ENCODE measurements at regions of chr6 and their contacts with region 1.

Region 1: DNA sequence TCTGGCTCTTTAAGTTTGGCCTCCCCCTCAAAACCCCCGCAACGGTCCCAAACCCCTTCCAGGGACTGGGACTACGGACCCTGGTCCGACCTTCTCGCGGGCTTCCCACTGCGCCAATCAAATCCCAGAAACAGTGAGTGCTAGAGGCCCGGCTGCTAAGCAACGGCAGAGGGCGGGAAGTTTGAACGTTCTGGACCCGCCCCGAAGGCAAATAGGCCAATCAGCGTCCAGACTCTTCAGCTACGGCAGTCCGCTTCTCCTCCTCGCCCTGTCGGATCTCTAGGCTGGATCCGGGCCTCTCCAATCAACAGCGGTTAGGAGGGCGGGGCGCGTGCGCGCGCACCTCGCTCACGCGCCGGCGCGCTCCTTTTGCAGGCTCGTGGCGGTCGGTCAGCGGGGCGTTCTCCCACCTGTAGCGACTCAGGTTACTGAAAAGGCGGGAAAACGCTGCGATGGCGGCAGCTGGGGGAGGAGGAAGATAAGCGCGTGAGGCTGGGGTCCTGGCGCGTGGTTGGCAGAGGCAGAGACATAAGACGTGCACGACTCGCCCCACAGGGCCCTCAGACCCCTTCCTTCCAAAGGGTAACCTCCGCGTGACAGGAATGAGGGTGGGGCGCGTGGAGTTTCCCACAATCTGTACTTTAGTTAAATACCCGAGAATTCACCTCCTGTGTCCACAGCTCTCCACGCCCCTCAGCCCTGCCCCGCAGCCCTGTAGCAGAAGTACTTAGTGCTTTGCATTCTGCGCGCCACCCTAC is at the start of gene MSH5:
- DNase-seq: peak; percentile 91 to 97 (median 93)
- H3K4me3 ChIP-seq: peak within 1 kb of the TSS; percentile 84
- H3K4me3 Mint-ChIP-seq: peak within 1 kb of the TSS; percentile 93 to 99 (median 98)
- H3K27ac ChIP-seq: peak within 1 kb of the TSS; percentile 98
- H3K27ac Mint-ChIP-seq: peak within 1 kb of the TSS; percentile 91 to 99 (median 96)
- H3K4me1 ChIP-seq: peaks cover 40% of the 10 kb centered on the region
- H3K4me1 Mint-ChIP-seq: peaks cover 46 to 62% (median 55%) of the 10 kb centered on the region in 3 donors
- H3K27me3 ChIP-seq: no peaks in the 10 kb centered on the region
- H3K27me3 Mint-ChIP-seq: no peaks in the 10 kb centered on the region
- total RNA-seq, gene MSH5: 36.4 to 39.8 TPM

Region 2: GRCh38 chr6:31815025-31815838 is 75.4 kb after region 1 on chr6 and contains the starts of genes HSPA1A and HSPA1L:
- CTCF ChIA-PET with region 1: interaction called, 4 read pairs
- POLR2A ChIA-PET with region 1: interaction called, 11 read pairs
- DNase-seq: peak; percentile 35 to 70 (median 49)
- H3K4me3 ChIP-seq: peak within 1 kb of the TSS; percentile 70
- H3K4me3 Mint-ChIP-seq: peak within 1 kb of the TSS; percentile 93 to 99 (median 96)
- H3K27ac ChIP-seq: peak within 1 kb of the TSS; percentile 88
- H3K27ac Mint-ChIP-seq: peak within 1 kb of the TSS; percentile 89 to 97 (median 94)
- H3K4me1 ChIP-seq: peaks cover 36% of the 10 kb centered on the region
- H3K4me1 Mint-ChIP-seq: peaks cover 41 to 58% (median 52%) of the 10 kb centered on the region in 3 donors
- H3K27me3 ChIP-seq: no peaks in the 10 kb centered on the region
- H3K27me3 Mint-ChIP-seq: no peaks in the 10 kb centered on the region
- total RNA-seq, gene HSPA1A: 64.8 to 70.1 TPM
- total RNA-seq, gene HSPA1L: 3.5 to 3.8 TPM

Region 3: DNA sequence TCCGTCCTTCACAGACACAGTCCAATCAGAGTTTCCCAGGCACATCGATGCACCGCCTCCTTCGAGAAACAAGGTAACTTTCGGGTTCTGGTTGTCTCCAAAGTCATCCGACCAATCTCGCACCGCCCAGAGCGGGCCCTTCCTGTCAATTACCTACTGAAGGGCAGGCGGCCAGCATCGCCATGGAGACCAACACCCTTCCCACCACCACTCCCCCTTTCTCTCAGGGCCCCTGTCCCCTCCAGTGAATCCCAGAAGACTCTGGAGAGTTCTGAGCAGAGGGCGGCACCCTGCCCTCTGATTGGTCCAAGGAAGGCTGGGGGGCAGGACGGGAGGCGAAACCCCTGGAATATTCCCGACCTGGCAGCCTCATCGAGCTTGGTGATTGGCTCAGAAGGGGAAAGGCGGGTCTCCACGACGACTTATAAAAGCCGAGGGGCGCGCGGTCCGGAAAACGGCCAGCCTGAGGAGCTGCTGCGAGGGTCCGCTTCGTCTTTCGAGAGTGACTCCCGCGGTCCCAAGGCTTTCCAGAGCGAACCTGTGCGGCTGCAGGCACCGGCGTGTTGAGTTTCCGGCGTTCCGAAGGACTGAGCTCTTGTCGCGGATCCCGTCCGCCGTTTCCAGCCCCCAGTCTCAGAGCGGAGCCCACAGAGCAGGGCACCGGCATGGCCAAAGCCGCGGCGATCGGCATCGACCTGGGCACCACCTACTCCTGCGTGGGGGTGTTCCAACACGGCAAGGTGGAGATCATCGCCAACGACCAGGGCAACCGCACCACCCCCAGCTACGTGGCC is 87.7 kb after region 1 on chr6 and contains the start of gene HSPA1B:
- CTCF ChIA-PET with region 1: interaction called, 71 read pairs
- POLR2A ChIA-PET with region 1: interaction called, 5 read pairs
- DNase-seq: peak; percentile 69 to 92 (median 81)
- H3K4me3 ChIP-seq: peak within 1 kb of the TSS; percentile 71
- H3K4me3 Mint-ChIP-seq: peak within 1 kb of the TSS; percentile 87 to 99 (median 96)
- H3K27ac ChIP-seq: peak within 1 kb of the TSS; percentile 89
- H3K27ac Mint-ChIP-seq: peak within 1 kb of the TSS; percentile 94 to 99 (median 96)
- H3K4me1 ChIP-seq: peaks cover 27% of the 10 kb centered on the region
- H3K4me1 Mint-ChIP-seq: peaks cover 41 to 54% (median 43%) of the 10 kb centered on the region in 3 donors
- H3K27me3 ChIP-seq: no peaks in the 10 kb centered on the region
- H3K27me3 Mint-ChIP-seq: peaks cover 0 to 4% of the 10 kb centered on the region in 2 donors
- total RNA-seq, gene HSPA1B: 80.9 to 81.4 TPM